Activated CD8-positive, alpha-beta T cell treated with anti-CD3 and anti-CD28 coated beads, Interleukin-2, amount 10 ng/mL, durations not matched to agents 7 days and 5 days (primary cell): ENCODE measurements at regions of chr6 and their contacts with region 1.

Region 1: DNA sequence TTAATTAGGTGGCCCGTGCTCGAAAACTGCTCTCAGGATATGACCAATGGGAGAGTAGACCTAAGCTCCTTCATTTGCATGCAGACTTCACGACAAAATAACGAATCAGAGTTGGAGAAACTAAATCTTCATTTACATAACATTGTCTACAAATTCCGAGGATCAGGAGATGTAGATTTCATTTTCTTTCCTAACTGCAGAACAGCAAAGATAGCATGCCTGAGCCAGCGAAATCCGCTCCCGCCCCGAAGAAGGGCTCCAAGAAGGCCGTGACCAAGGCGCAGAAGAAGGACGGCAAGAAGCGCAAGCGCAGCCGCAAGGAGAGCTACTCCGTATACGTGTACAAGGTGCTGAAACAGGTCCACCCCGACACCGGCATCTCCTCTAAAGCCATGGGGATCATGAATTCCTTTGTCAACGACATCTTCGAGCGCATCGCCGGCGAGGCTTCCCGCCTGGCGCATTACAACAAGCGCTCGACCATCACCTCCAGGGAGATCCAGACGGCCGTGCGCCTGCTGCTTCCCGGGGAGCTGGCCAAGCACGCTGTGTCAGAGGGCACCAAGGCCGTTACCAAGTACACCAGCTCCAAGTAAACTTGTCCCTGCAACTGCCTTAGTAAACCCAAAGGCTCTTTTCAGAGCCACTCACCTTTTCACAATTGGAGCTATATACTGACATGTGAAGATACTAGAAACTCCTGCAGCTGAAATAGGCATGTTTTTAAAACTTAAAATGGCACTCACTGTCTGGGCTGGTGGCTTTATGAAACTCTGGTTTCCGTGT is 96.5 kb downstream of the HFE start:
- DNase-seq: peak; percentile 80
- ATAC-seq: peak; percentile 80
- H3K4me3 Mint-ChIP-seq: peak overlapping the region; percentile 83
- H3K27ac Mint-ChIP-seq: peak overlapping the region; percentile 97
- H3K4me1 Mint-ChIP-seq: peaks cover 79% of the 10 kb centered on the region
- H3K27me3 Mint-ChIP-seq: no peaks in the 10 kb centered on the region

Region 2: DNA sequence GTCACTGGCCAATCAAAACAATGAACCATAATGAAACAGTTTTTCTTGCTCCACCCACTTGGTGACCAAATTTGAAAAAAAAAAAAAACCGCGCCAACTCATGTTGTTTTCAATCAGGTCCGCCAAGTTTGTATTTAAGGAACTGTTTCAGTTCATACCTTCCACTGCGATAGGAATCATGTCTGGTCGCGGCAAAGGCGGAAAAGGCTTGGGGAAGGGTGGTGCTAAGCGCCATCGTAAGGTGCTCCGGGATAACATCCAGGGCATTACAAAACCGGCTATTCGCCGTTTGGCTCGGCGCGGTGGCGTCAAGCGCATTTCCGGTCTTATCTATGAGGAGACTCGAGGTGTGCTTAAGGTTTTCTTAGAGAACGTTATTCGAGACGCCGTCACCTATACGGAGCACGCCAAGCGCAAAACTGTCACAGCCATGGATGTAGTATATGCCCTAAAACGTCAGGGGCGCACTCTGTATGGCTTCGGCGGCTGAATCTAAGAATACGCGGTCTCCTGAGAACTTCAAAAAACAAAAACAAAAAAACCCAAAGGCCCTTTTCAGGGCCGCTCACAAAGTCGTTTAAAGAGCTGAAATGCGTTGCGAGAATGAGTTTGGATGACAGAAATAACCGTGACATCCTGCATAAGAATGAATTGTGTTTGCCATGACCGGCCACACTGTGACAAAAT is 79.9 kb before region 1 on chr6:
- CTCF ChIA-PET with region 1: no interaction called
- POLR2A ChIA-PET with region 1: interaction called, 14 read pairs
- DNase-seq: peak; percentile 93
- ATAC-seq: peak; percentile 89
- H3K4me3 Mint-ChIP-seq: peak overlapping the region; percentile 85
- H3K27ac Mint-ChIP-seq: peak overlapping the region; percentile 98
- H3K4me1 Mint-ChIP-seq: peaks cover 26% of the 10 kb centered on the region
- H3K27me3 Mint-ChIP-seq: peaks cover 2% of the 10 kb centered on the region

Region 3: DNA sequence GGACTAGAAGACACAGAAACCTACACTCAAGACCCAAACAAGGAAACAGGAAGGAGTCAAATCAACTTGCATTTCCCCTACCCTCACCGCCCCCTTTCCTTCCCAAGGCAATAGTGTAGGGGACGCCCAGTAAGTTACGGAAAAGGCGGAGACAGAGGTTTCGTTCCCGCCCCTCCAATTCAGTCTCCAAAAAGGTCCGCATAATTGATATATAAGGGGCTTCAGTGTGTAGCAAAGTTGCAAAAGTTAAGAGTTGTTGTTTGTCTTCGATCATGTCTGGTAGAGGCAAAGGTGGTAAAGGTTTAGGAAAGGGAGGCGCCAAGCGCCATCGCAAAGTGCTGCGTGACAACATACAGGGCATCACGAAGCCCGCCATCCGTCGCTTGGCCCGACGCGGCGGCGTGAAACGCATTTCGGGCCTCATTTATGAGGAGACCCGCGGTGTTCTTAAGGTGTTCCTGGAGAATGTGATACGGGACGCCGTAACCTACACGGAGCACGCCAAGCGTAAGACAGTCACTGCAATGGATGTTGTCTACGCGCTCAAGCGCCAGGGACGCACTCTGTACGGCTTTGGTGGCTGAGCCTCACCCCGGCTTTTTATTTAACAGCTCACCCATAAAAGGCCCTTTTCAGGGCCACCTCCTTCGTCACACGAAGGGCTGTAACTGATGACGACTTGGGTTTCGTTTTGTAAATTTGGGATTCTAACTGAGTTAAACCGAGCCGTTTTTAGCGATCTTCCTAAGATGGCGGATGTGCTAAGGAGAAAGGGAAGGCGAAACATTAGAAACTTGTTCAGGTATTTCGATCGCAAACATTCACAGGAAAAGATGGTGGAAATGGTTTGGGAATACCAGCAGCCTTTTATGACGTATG is 56.6 kb after region 1 on chr6:
- CTCF ChIA-PET with region 1: no interaction called
- POLR2A ChIA-PET with region 1: interaction called, 1,100 read pairs
- DNase-seq: peak; percentile 94
- ATAC-seq: peak; percentile 81
- H3K4me3 Mint-ChIP-seq: peak overlapping the region; percentile 74
- H3K27ac Mint-ChIP-seq: peak overlapping the region; percentile 96
- H3K4me1 Mint-ChIP-seq: peaks cover 51% of the 10 kb centered on the region
- H3K27me3 Mint-ChIP-seq: peaks cover 2% of the 10 kb centered on the region

Region 4: GRCh38 chr6:26312501-26313390 is 129.0 kb after region 1 on chr6:
- CTCF ChIA-PET with region 1: no interaction called
- POLR2A ChIA-PET with region 1: no interaction called
- DNase-seq: peak; percentile 89
- ATAC-seq: peak; percentile 87
- H3K4me3 Mint-ChIP-seq: peak overlapping the region; percentile 84
- H3K27ac Mint-ChIP-seq: peak overlapping the region; percentile 89
- H3K4me1 Mint-ChIP-seq: peaks cover 49% of the 10 kb centered on the region
- H3K27me3 Mint-ChIP-seq: no peaks in the 10 kb centered on the region

Region 5: DNA sequence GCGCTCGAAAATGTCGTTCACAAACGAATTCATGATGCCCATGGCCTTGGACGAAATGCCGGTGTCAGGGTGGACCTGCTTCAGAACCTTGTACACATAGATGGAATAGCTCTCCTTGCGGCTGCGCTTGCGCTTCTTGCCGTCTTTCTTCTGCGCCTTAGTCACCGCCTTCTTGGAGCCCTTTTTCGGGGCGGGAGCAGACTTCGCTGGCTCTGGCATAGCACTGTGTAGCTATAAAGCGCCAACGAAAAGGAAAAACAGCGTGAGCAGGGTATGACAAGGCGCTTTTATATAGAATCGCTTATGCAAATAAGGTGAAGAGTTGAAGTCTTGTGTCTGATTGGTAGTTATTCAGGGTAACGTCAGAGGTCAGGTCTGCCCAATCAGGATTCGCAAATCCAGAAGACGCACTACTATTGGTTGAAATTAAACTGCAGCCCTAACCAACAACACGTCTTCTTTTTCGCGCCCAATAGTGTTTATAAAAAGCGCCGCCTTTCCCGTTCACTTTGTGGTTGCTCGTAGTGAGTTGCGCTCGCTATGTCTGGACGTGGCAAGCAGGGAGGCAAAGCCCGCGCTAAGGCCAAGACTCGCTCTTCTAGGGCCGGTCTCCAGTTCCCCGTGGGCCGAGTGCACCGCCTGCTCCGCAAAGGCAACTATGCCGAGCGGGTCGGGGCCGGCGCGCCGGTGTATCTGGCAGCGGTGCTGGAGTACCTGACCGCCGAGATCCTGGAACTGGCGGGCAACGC is 948.9 kb after region 1 on chr6:
- CTCF ChIA-PET with region 1: no interaction called
- POLR2A ChIA-PET with region 1: interaction called, 14 read pairs
- DNase-seq: peak; percentile 95
- ATAC-seq: peak; percentile 76
- H3K4me3 Mint-ChIP-seq: no peak overlapping the region
- H3K27ac Mint-ChIP-seq: no peak overlapping the region
- H3K4me1 Mint-ChIP-seq: peaks cover 68% of the 10 kb centered on the region
- H3K27me3 Mint-ChIP-seq: no peaks in the 10 kb centered on the region

Region 6: GRCh38 chr6:27871924-27872638 is 1688.3 kb after region 1 on chr6:
- CTCF ChIA-PET with region 1: no interaction called
- POLR2A ChIA-PET with region 1: interaction called, 24 read pairs
- DNase-seq: peak; percentile 92
- ATAC-seq: peak; percentile 62
- H3K4me3 Mint-ChIP-seq: peak overlapping the region; percentile 85
- H3K27ac Mint-ChIP-seq: peak overlapping the region; percentile 99
- H3K4me1 Mint-ChIP-seq: peaks cover 64% of the 10 kb centered on the region
- H3K27me3 Mint-ChIP-seq: no peaks in the 10 kb centered on the region